ENCODE measurements at regions of chrX and their contacts with region 1.

Region 1: GRCh38 chrX:72126539-72127140 is 5.1 kb downstream of the RTL5 start:
- DNase-seq: peak; percentile 84
- H3K4me3 Mint-ChIP-seq: no peak overlapping the region
- H3K27ac Mint-ChIP-seq: no peak overlapping the region
- H3K4me1 Mint-ChIP-seq: no peaks in the 10 kb centered on the region
- H3K27me3 Mint-ChIP-seq: peaks cover 59% of the 10 kb centered on the region
- CTCF ChIP-seq: peak; percentile 65

Region 2: GRCh38 chrX:71998836-71999509 is 127.7 kb before region 1 on chrX:
- CTCF ChIA-PET with region 1: interaction called, 8 read pairs
- intact Hi-C with region 1: loop called (anchors 1 kb)
- DNase-seq: peak; percentile 43
- H3K4me3 Mint-ChIP-seq: no peak overlapping the region
- H3K27ac Mint-ChIP-seq: no peak overlapping the region
- H3K4me1 Mint-ChIP-seq: no peaks in the 10 kb centered on the region
- H3K27me3 Mint-ChIP-seq: peaks cover 46% of the 10 kb centered on the region
- CTCF ChIP-seq: peak; percentile 45

Region 3: GRCh38 chrX:72018277-72019112 is 108.1 kb before region 1 on chrX:
- CTCF ChIA-PET with region 1: interaction called, 5 read pairs
- intact Hi-C with region 1: loop called (anchors 1 kb)
- DNase-seq: peak; percentile 87
- H3K4me3 Mint-ChIP-seq: peak overlapping the region; percentile 40
- H3K27ac Mint-ChIP-seq: no peak overlapping the region
- H3K4me1 Mint-ChIP-seq: peaks cover 10% of the 10 kb centered on the region
- H3K27me3 Mint-ChIP-seq: peaks cover 47% of the 10 kb centered on the region
- CTCF ChIP-seq: peak; percentile 59

Region 4: DNA sequence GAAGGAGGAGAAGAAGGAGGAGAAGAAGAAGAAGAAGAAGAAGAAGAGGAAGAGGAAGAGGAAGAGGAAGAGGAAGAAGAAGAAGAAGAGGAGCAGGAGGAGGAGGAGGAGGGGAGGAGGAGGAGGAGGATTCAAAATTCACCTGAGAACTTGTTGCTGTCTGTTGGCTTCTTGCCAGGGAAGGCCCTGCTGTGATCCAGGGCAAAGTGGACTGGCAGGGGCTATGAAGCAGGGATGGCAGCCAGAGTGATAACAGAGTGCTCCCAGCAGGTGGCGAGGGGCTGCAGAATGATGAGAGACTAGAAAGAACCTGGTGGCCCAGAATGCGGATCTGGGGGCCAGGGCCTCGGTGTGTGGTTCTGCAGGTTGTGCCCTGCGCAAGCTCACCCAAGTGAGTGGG is 77.7 kb before region 1 on chrX:
- CTCF ChIA-PET with region 1: no interaction called
- intact Hi-C with region 1: no loop called
- DNase-seq: no peak
- H3K4me3 Mint-ChIP-seq: no peak overlapping the region
- H3K27ac Mint-ChIP-seq: no peak overlapping the region
- H3K4me1 Mint-ChIP-seq: peaks cover 8% of the 10 kb centered on the region
- H3K27me3 Mint-ChIP-seq: peaks cover 74% of the 10 kb centered on the region
- CTCF ChIP-seq: no peak

Measured in Calu3 (cell line).